CD8-positive, alpha-beta T cell (primary cell): ENCODE measurements at regions of chr7 and their contacts with region 1.

Region 1: DNA sequence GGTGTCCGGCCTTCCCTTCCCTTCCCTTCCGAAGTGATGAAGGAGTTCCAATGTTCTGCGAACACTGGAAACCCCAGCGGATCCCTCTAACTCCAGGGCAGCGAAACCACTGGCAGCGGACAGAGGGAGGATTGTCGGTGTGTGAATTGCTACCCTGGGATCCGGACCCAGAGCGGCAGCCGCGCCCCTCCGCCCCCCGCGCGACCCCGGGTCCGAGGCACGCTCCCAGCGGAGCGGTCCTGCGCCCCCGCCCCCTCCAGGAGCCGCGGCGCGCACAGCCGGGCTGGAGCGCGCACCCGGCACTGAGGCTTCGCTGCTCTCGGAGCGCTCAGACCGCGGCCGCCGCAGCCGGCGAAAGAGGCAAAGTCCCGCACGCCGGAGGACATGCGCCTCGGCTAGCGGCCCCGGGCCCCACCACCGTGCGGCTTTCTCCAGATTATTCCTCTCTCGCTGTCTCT is at the start of gene PTPRZ1:
- DNase-seq: no peak
- ATAC-seq: no peak
- H3K4me3 ChIP-seq: no peak within 1 kb of the TSS
- H3K4me3 Mint-ChIP-seq: no peak within 1 kb of the TSS
- H3K27ac ChIP-seq: no peak within 1 kb of the TSS
- H3K27ac Mint-ChIP-seq: no peak within 1 kb of the TSS
- H3K4me1 ChIP-seq: no peaks in the 10 kb centered on the region
- H3K4me1 Mint-ChIP-seq: peaks cover 5% of the 10 kb centered on the region
- H3K27me3 ChIP-seq: peaks cover 0 to 2% of the 10 kb centered on the region in 2 experiments
- H3K27me3 Mint-ChIP-seq: peaks cover 22% of the 10 kb centered on the region
- CTCF ChIP-seq: no peak
- total RNA-seq, gene PTPRZ1: not detected

Region 2: GRCh38 chr7:121936951-121937623 is 64.2 kb after region 1 on chr7:
- CTCF ChIA-PET with region 1: no interaction called
- POLR2A ChIA-PET with region 1: no interaction called
- intact Hi-C with region 1: loop called in 1 of 2 experiments (anchors 10 kb)
- DNase-seq: no peak
- ATAC-seq: no peak
- H3K4me3 ChIP-seq: no peak overlapping the region
- H3K4me3 Mint-ChIP-seq: no peak overlapping the region
- H3K27ac ChIP-seq: no peak overlapping the region
- H3K27ac Mint-ChIP-seq: no peak overlapping the region
- H3K4me1 ChIP-seq: no peaks in the 10 kb centered on the region
- H3K4me1 Mint-ChIP-seq: no peaks in the 10 kb centered on the region
- H3K27me3 ChIP-seq: no peaks in the 10 kb centered on the region
- H3K27me3 Mint-ChIP-seq: no peaks in the 10 kb centered on the region
- CTCF ChIP-seq: no peak